ENCODE measurements at regions of chrX and their contacts with region 1.

Region 1: DNA sequence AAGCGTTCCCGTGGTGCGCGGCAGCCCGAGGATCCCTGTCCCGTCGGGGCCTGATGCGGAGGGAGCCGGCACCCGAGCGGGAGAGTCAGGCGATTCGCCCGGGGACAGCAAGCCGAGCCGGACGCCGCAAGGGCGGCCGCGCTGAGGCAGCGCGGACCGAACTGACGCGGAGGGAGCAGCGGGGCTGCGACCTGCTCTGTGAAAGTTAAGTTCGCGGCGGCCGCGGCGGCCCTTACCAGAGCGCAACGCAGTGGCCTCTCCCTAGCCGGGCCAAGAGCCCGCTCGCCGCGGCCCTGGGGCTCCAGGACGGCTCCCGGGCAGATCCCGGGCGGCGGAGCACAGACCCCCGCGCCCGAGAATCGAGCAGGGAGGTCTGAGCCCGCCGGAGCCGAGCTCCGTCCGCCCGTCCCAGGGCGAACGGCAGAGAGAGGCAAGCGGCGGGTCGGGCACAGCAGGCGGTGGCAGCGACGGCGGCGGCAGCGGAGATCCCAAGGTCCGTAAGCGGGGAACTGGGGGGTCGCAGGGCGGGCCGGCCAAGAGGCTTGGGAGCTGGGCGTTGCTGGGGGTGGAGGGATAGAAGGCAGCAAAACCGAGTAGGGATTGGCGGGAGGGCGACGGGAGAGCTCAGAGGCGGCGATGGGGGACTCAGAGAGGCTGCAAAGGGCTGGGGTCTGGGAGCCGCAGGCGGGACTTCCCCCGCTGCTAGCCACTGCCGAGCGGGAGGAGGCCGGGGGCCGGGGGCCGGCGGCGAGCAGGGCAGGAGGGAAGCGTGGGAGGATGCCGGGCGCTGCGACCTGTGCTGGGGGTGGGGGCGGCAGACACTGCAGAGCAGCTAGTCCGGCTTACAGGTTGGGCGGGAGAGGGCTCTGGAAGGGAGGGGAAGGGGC is 1.0 kb downstream of the GPR50 start:
- DNase-seq: no peak
- ATAC-seq: peak in 1 of 8 donors; percentile 26
- H3K4me3 ChIP-seq: peak overlapping the region in 5 of 10 donors; percentile 3 to 22 (median 13)
- H3K27ac ChIP-seq: no peak overlapping the region
- H3K4me1 ChIP-seq: no peaks in the 10 kb centered on the region
- H3K27me3 ChIP-seq: peaks cover 0 to 91% (median 47%) of the 10 kb centered on the region in 7 donors
- CTCF ChIP-seq: no peak

Region 2: GRCh38 chrX:151359931-151360871 is 182.8 kb after region 1 on chrX:
- intact Hi-C with region 1: loop called in 1 of 10 experiments (anchors 10 kb)
- DNase-seq: peak; percentile 3 to 30
- ATAC-seq: peak in 4 of 8 donors; percentile 42 to 77 (median 52)
- H3K4me3 ChIP-seq: no peak overlapping the region
- H3K27ac ChIP-seq: no peak overlapping the region
- H3K4me1 ChIP-seq: no peaks in the 10 kb centered on the region
- H3K27me3 ChIP-seq: peaks cover 0 to 36% (median 0%) of the 10 kb centered on the region in 7 donors
- CTCF ChIP-seq: peak; percentile 13 to 68 (median 53)

Region 3: DNA sequence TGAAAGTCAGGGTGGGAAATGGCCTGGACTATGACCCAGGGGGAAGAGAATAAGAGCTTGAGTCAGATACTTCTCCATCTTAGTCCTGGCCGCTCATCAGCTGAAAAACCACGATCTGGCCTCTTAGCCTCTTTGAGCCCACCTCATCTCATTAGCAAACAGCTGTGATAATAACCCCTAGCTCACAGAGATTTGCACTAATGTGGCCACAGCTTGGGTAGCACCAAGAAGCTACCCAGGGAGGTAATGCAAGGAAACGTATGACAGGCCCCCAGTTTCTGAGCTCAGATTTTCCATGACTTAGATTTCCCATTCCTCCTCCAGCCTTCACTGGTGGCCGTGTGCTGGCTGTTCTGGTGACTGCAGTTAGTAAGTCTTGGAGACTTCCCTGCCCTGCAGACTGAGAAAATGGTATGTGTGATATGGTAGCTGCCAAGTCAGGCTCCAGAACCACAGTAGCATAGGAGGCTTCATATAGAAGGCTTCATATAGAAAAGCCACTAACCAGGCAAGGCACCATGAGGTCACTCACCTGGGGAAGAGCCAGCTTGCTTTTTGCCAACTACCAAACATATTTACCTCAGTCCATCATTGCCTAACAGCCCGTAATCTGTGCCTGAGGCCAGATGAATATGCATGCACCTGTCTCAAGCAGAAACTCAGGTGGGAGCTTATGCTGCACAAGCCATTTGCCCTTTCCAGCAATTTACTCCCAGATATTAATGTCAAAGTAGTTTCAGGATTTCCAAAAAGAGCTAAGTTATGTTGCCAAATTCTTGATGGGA is 848.5 kb after region 1 on chrX:
- intact Hi-C with region 1: no loop called
- DNase-seq: no peak
- ATAC-seq: no peak
- H3K4me3 ChIP-seq: no peak overlapping the region
- H3K27ac ChIP-seq: no peak overlapping the region
- H3K4me1 ChIP-seq: no peaks in the 10 kb centered on the region
- H3K27me3 ChIP-seq: no peaks in the 10 kb centered on the region
- CTCF ChIP-seq: no peak

Measured in heart right ventricle (tissue), 16 donors.